Activated T-helper 1 cell treated with anti-CD3 and anti-CD28 coated beads, Interleukin-12 subunit alpha, Interleukin-12 subunit beta, Interleukin-2, Interleukin-4 antibody, amounts not matched to agents 30 ng/mL and 10 ng/mL and 1 ng/mL, durations not matched to agents 14 hours and 24 hours and 36 hours (primary cell): ENCODE measurements at regions of chr22 and their contacts with region 1.

Region 1: DNA sequence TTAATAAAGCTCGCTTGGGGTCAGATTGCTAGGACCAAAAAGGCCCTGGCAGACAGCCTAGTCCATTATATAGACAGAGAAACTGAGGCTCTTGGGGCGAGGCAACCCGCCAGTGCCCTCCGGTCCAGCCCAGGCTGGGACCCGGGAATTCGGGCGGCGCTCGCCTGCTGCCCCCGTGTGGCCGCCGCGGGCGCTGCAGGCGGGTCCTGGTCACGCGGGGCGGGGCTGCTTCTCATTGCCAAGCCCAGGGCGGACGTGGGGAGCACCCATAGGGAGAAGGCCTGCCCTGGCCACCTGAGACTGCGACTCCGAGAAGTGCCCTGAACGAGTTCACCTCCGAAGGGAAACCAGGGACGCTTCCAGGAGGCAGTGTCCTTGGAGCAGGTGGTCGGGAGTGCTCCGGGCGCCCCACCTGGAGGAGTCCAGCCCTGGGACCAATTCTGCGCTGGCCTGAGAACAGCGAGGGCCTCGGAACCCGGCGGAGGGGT is 36.0 kb upstream of the CSNK1E start:
- DNase-seq: peak; percentile 61
- H3K4me3 Mint-ChIP-seq: no peak overlapping the region
- H3K27ac Mint-ChIP-seq: no peak overlapping the region
- H3K4me1 Mint-ChIP-seq: no peaks in the 10 kb centered on the region
- H3K27me3 Mint-ChIP-seq: no peaks in the 10 kb centered on the region

Region 2: DNA sequence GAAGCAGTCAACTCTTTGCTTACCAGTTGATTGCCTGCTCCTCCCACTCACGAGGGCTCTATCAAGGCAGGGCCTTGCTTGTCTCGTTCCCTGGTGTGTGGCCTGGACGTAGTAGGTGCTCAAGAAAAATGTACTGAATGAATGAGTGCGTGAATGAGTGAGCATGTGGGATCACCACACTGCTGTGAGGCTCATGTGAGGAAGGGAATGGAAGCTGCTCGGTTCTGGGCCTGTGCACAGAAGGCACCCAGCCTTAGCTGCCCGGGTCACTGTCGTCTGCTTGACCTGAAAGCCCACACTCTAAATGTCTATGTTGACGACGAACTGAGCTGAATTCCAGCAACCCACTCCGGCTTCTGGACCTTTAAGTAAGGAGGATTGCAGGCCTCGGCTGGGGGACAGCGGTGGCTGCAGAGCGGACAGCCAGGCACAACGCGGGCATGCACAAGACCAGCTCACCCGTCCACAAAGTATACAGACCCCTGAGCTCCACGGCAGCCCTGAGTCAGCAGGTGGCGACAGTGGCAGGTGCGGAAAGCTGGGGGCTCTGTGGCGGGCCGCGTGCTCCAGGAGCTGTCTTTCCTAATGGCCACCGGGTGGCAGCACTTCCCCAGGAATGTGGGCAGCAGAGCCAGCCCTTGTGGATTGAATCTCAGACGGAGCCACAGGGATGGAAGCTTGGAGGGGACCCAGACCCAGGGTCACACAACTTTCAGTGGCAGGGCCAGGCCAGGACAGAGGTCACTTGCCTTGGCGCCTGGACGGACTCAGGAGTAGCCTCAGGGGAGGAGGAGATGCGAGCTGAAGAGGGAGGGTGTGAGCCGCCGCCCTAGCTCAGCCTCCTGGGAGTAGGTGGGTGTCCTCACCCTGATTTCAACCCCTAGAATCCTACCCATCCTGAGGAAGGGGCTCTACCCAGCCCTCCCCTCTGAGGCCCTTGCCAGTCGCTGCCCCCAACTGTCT is 301.0 kb before region 1 on chr22:
- intact Hi-C with region 1: loop called (anchors 1 kb)
- DNase-seq: peak; percentile 59
- H3K4me3 Mint-ChIP-seq: no peak overlapping the region
- H3K27ac Mint-ChIP-seq: no peak overlapping the region
- H3K4me1 Mint-ChIP-seq: peaks cover 13% of the 10 kb centered on the region
- H3K27me3 Mint-ChIP-seq: peaks cover 8% of the 10 kb centered on the region

Region 3: DNA sequence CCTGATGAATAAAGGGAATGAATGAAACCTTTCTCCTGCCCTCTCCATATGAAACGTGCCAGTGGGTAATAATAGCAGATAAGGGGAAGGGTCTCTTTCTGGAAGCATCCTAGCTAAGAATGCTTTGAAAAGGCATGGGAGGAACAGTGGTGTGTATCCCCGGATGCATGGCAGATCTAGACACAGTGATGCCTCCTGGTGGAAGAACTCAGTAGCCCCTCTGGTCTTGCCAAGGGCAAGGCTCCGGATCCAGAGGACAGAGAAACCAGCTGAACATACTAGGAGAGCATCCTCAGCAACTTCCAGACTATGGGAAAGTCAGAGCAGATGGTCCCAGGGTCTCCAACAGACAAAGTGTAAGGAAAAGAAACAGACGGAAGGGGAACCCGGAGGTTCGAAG is 249.1 kb before region 1 on chr22:
- intact Hi-C with region 1: loop called (anchors 2 kb)
- DNase-seq: no peak
- H3K4me3 Mint-ChIP-seq: no peak overlapping the region
- H3K27ac Mint-ChIP-seq: no peak overlapping the region
- H3K4me1 Mint-ChIP-seq: peaks cover 5% of the 10 kb centered on the region
- H3K27me3 Mint-ChIP-seq: peaks cover 2% of the 10 kb centered on the region

Region 4: GRCh38 chr22:38262051-38262795 is 91.0 kb before region 1 on chr22:
- intact Hi-C with region 1: loop called (anchors 2 kb)
- DNase-seq: peak; percentile 14
- H3K4me3 Mint-ChIP-seq: no peak overlapping the region
- H3K27ac Mint-ChIP-seq: no peak overlapping the region
- H3K4me1 Mint-ChIP-seq: peaks cover 28% of the 10 kb centered on the region
- H3K27me3 Mint-ChIP-seq: no peaks in the 10 kb centered on the region

Region 5: DNA sequence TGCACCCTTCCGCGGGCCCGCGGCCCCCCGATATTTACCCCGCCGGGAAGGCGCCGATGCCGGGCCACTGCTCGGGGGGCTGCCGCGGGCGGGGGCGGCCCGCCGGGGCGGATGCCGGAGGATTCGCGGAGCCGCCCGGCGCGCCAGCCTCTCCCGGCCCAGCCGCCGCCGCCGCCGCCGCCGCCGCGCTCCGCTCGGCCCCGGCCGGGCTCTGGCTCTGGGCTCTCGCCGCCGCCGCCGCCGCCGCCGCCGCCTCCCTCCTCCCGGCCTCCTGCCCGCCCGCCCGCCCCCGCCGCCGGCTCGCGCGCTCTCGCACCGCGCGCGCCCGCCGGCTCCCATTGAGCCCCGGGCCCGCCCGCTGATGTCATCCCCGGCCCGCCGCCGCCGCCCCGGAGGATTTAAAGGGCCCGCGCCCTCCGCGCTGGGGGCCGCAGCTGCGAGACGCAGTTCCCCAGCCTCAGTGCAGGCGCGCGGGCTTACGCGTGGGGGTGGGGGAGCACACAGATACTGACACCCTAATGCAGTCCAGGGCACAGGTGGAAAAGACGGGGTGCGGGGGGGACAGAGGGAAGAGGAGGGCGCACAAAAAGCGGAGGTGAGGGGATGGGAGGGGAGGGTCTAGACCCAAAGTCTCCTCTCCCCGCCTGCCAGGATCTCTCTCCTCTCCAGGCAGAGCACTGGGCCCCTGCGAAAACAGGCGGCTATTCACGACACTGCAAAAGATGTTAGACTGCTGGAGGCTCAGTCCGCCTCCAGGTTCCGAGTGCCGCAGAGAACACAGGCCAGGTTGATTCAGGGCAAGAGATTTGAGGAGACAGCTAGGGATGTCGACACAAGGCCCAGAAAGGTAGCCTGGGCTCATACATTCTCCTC is 35.8 kb before region 1 on chr22 and contains the start of gene CSNK1E:
- intact Hi-C with region 1: loop called (anchors 5 kb)
- DNase-seq: peak; percentile 74
- H3K4me3 Mint-ChIP-seq: peak within 1 kb of the TSS; percentile 90
- H3K27ac Mint-ChIP-seq: peak within 1 kb of the TSS; percentile 87
- H3K4me1 Mint-ChIP-seq: peaks cover 44% of the 10 kb centered on the region
- H3K27me3 Mint-ChIP-seq: no peaks in the 10 kb centered on the region
- total RNA-seq, gene CSNK1E: 151 and 154 TPM in 2 replicates